ENCODE measurements at regions of chr3 and their contacts with region 1.

Region 1: DNA sequence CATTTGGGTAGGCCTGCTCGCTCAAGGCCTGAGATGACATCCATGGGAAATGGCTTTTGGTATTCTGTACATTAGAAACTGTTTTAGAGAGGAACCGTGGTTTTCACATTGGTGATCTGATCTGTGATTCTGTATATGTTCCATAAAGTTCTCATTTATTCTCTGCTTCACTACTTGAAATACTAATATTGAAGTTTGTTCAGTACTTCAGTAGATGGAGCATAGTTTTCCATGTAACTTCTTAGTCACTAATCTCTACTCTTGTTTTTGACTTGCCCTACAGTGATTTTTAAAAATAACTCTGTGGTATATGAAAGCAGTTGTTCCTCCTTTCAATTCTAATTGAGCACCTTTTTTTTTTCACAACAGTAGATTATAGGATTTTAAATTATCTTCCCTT is 66.5 kb downstream of the MBNL1 start:
- DNase-seq: no peak
- ATAC-seq: no peak
- H3K4me3 ChIP-seq: no peak overlapping the region
- H3K4me3 Mint-ChIP-seq: peak overlapping the region in 8 of 10 donors; percentile 1 to 74 (median 44)
- H3K27ac ChIP-seq: peak overlapping the region; percentile 38
- H3K27ac Mint-ChIP-seq: peak overlapping the region in 8 of 9 donors; percentile 48 to 86 (median 68)
- H3K4me1 ChIP-seq: peaks cover 49 to 51% of the 10 kb centered on the region in 2 donors
- H3K4me1 Mint-ChIP-seq: peaks cover 55 to 100% (median 93%) of the 10 kb centered on the region in 7 donors
- H3K27me3 ChIP-seq: no peaks in the 10 kb centered on the region
- H3K27me3 Mint-ChIP-seq: no peaks in the 10 kb centered on the region

Region 2: DNA sequence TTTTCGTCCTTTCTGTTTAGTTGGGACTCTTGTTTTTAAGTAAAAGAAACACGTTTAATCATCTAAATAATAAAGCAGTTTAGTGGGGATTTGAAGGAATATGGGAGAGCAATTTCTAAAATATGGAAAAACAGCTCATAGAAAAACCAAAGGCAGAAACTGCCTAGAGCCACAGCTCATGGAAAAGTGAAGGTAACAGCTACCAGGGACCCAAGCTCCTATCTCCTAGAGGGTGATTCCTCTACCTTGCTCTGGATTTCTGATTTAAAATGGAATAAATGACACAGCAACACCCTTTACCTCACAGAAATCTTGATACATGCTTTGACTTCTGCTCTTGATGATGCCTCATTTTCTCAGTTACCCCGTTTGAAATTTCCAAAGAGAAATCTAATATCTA is 489.8 kb before region 1 on chr3:
- CTCF ChIA-PET with region 1: no interaction called
- POLR2A ChIA-PET with region 1: no interaction called
- intact Hi-C with region 1: loop called in 1 of 2 experiments (anchors 5 kb)
- DNase-seq: no peak
- ATAC-seq: no peak
- H3K4me3 ChIP-seq: no peak overlapping the region
- H3K4me3 Mint-ChIP-seq: no peak overlapping the region
- H3K27ac ChIP-seq: no peak overlapping the region
- H3K27ac Mint-ChIP-seq: no peak overlapping the region
- H3K4me1 ChIP-seq: no peaks in the 10 kb centered on the region
- H3K4me1 Mint-ChIP-seq: peaks cover 0 to 2% (median 0%) of the 10 kb centered on the region in 7 donors
- H3K27me3 ChIP-seq: no peaks in the 10 kb centered on the region
- H3K27me3 Mint-ChIP-seq: peaks cover 0 to 35% (median 4%) of the 10 kb centered on the region in 5 donors

Region 3: GRCh38 chr3:152172460-152172859 is 162.8 kb before region 1 on chr3:
- CTCF ChIA-PET with region 1: no interaction called
- POLR2A ChIA-PET with region 1: no interaction called
- intact Hi-C with region 1: no loop called
- DNase-seq: no peak
- ATAC-seq: no peak
- H3K4me3 ChIP-seq: no peak overlapping the region
- H3K4me3 Mint-ChIP-seq: no peak overlapping the region
- H3K27ac ChIP-seq: no peak overlapping the region
- H3K27ac Mint-ChIP-seq: no peak overlapping the region
- H3K4me1 ChIP-seq: no peaks in the 10 kb centered on the region
- H3K4me1 Mint-ChIP-seq: peaks cover 0 to 8% (median 7%) of the 10 kb centered on the region in 7 donors
- H3K27me3 ChIP-seq: no peaks in the 10 kb centered on the region
- H3K27me3 Mint-ChIP-seq: peaks cover 0 to 22% (median 0%) of the 10 kb centered on the region in 5 donors

Region 4: GRCh38 chr3:152349392-152349791 is 14.1 kb after region 1 on chr3:
- CTCF ChIA-PET with region 1: interaction called, 4 read pairs
- POLR2A ChIA-PET with region 1: no interaction called
- intact Hi-C with region 1: loop called (anchors 1 to 2 kb)
- DNase-seq: no peak
- ATAC-seq: no peak
- H3K4me3 ChIP-seq: no peak overlapping the region
- H3K4me3 Mint-ChIP-seq: no peak overlapping the region
- H3K27ac ChIP-seq: peak overlapping the region; percentile 34
- H3K27ac Mint-ChIP-seq: no peak overlapping the region
- H3K4me1 ChIP-seq: peaks cover 26 to 31% of the 10 kb centered on the region in 2 donors
- H3K4me1 Mint-ChIP-seq: peaks cover 18 to 52% (median 42%) of the 10 kb centered on the region in 7 donors
- H3K27me3 ChIP-seq: no peaks in the 10 kb centered on the region
- H3K27me3 Mint-ChIP-seq: no peaks in the 10 kb centered on the region

Region 5: GRCh38 chr3:152356870-152357276 is 21.6 kb after region 1 on chr3:
- CTCF ChIA-PET with region 1: interaction called, 4 read pairs
- POLR2A ChIA-PET with region 1: interaction called, 3 read pairs
- intact Hi-C with region 1: loop called in 1 of 2 experiments (anchors 2 kb)
- DNase-seq: no peak
- ATAC-seq: peak; percentile 38
- H3K4me3 ChIP-seq: no peak overlapping the region
- H3K4me3 Mint-ChIP-seq: peak overlapping the region in 7 of 10 donors; percentile 7 to 59 (median 38)
- H3K27ac ChIP-seq: peak overlapping the region; percentile 30
- H3K27ac Mint-ChIP-seq: peak overlapping the region in 7 of 9 donors; percentile 21 to 85 (median 71)
- H3K4me1 ChIP-seq: peaks cover 25 to 50% of the 10 kb centered on the region in 2 donors
- H3K4me1 Mint-ChIP-seq: peaks cover 42 to 93% (median 81%) of the 10 kb centered on the region in 7 donors
- H3K27me3 ChIP-seq: no peaks in the 10 kb centered on the region
- H3K27me3 Mint-ChIP-seq: no peaks in the 10 kb centered on the region